ENCODE measurements at regions of chr1 and their contacts with region 1.

Region 1: GRCh38 chr1:220873868-220874655 is 5.2 kb upstream of the HLX start:
- DNase-seq: peak; percentile 74
- H3K4me3 Mint-ChIP-seq: no peak overlapping the region
- H3K27ac Mint-ChIP-seq: no peak overlapping the region
- H3K4me1 Mint-ChIP-seq: no peaks in the 10 kb centered on the region
- H3K27me3 Mint-ChIP-seq: no peaks in the 10 kb centered on the region
- CTCF ChIP-seq: peak; percentile 99

Region 2: GRCh38 chr1:220770245-220770918 is 103.7 kb before region 1 on chr1:
- CTCF ChIA-PET with region 1: no interaction called
- POLR2A ChIA-PET with region 1: no interaction called
- intact Hi-C with region 1: no loop called
- DNase-seq: no peak
- H3K4me3 Mint-ChIP-seq: no peak overlapping the region
- H3K27ac Mint-ChIP-seq: no peak overlapping the region
- H3K4me1 Mint-ChIP-seq: no peaks in the 10 kb centered on the region
- H3K27me3 Mint-ChIP-seq: no peaks in the 10 kb centered on the region
- CTCF ChIP-seq: no peak

Region 3: DNA sequence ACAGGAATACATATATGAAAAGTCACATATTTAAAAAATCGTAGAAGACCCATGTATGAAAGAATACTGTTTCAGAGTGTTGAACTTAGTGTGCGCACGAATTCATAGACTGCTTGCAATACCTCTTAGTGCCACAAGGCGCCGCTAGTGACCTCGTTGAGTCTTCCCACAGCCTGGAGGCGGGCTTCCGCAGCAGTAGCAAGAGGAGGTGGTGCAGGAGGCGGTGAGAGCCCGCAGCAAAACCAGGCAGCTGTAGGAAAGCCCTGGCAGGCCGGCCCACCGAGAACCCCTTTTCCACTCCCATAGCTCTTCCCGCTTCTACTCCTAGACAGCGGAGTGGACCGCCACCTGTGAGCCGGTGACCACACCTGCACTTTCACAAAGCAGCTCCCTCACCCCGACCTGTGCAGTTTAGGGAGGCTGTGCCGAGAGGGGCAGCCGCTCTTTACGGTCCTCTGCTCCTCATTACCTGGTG is 63.8 kb before region 1 on chr1:
- CTCF ChIA-PET with region 1: interaction called, 21 read pairs
- POLR2A ChIA-PET with region 1: no interaction called
- intact Hi-C with region 1: no loop called
- DNase-seq: peak; percentile 91
- H3K4me3 Mint-ChIP-seq: no peak overlapping the region
- H3K27ac Mint-ChIP-seq: no peak overlapping the region
- H3K4me1 Mint-ChIP-seq: no peaks in the 10 kb centered on the region
- H3K27me3 Mint-ChIP-seq: no peaks in the 10 kb centered on the region
- CTCF ChIP-seq: peak; percentile 99

Region 4: DNA sequence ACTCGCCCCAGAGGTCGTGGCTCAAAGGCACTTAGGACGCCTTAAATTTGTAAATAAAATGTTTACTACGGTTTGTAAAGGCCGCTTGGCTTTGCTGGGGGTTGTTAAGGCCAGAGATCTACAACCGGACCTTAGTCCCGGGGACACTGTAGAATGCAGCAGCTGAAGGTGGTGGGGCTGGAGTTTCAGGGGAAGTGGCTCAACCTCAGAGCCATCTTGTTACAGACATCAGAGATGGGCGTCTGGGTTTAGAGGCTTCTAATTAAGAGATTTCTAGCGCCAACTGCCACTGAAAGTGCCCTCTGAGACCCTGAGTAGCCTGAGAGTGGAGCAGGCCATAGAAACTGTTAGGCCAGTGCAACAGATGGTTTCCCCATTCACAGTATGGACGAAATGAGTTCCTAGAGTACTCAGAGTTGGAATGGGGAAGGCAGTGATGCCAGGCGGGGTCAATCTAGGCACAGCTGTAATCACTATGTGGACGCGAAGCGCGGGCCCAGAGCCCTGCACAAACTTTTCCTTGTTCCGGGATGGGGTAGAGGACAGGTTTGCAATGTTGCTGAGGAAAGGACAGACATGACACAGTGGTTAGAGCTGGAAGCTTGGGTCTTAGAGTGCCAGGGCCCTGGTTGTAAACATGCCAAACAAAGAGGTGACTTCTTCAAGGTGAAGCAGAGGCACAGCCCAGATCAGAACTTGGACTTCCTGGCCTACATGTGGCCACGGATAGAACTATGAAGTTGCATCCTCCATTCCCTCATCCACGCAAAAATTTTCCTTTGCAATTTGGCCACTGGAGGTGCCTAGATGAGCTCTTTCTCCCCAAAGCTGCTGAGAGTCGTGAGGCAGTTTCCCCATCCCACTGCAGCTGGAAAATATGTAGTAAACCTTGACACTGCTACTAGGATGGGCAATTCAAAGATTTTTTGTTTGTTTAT is 11.2 kb after region 1 on chr1:
- CTCF ChIA-PET with region 1: interaction called, 11 read pairs
- POLR2A ChIA-PET with region 1: interaction called, 4 read pairs
- intact Hi-C with region 1: no loop called
- DNase-seq: no peak
- H3K4me3 Mint-ChIP-seq: no peak overlapping the region
- H3K27ac Mint-ChIP-seq: no peak overlapping the region
- H3K4me1 Mint-ChIP-seq: peaks cover 19% of the 10 kb centered on the region
- H3K27me3 Mint-ChIP-seq: peaks cover 12% of the 10 kb centered on the region
- CTCF ChIP-seq: no peak

Region 5: GRCh38 chr1:220957233-220957605 is 83.2 kb after region 1 on chr1:
- CTCF ChIA-PET with region 1: interaction called, 3 read pairs
- POLR2A ChIA-PET with region 1: interaction called, 3 read pairs
- intact Hi-C with region 1: loop called (anchors 2 kb)
- DNase-seq: peak; percentile 97
- H3K4me3 Mint-ChIP-seq: peak overlapping the region; percentile 33
- H3K27ac Mint-ChIP-seq: peak overlapping the region; percentile 89
- H3K4me1 Mint-ChIP-seq: peaks cover 21% of the 10 kb centered on the region
- H3K27me3 Mint-ChIP-seq: no peaks in the 10 kb centered on the region
- CTCF ChIP-seq: no peak

Region 6: GRCh38 chr1:220990427-220991339 is 116.6 kb after region 1 on chr1:
- CTCF ChIA-PET with region 1: interaction called, 6 read pairs
- POLR2A ChIA-PET with region 1: interaction called, 3 read pairs
- intact Hi-C with region 1: loop called (anchors 1 kb)
- DNase-seq: peak; percentile 79
- H3K4me3 Mint-ChIP-seq: no peak overlapping the region
- H3K27ac Mint-ChIP-seq: no peak overlapping the region
- H3K4me1 Mint-ChIP-seq: peaks cover 15% of the 10 kb centered on the region
- H3K27me3 Mint-ChIP-seq: peaks cover 10% of the 10 kb centered on the region
- CTCF ChIP-seq: peak; percentile 32

Region 7: DNA sequence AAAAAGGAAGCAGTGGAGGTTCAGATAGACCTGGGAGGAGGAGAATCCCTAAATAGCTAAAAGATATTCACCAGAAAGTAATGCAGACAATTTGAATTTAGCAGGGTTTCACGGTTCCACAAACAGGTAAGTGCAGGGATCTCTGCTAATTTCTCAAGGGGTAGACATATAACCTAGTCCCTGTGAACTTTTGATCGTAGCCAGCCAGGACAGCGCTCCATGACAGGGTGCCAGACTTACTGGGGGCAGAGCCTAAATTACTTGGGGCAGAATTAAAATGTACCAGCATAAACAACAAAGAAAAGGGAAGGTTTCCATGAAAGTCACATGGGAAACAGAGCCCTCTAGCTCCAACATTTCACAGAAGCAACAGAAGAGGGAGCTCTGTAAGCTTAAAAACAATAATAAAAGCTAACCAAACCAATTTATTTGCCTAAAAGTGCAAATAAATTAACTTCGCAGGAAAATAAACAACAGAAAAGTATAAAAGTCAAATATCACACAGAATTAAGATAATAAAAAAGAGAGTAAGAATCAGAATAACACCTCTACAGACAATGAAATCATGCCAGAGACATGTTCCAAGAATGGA is 669.6 kb after region 1 on chr1:
- CTCF ChIA-PET with region 1: no interaction called
- POLR2A ChIA-PET with region 1: no interaction called
- intact Hi-C with region 1: loop called (anchors 1 kb)
- DNase-seq: peak; percentile 56
- H3K4me3 Mint-ChIP-seq: no peak overlapping the region
- H3K27ac Mint-ChIP-seq: peak overlapping the region; percentile 44
- H3K4me1 Mint-ChIP-seq: peaks cover 15% of the 10 kb centered on the region
- H3K27me3 Mint-ChIP-seq: no peaks in the 10 kb centered on the region
- CTCF ChIP-seq: peak; percentile 86